Ascending aorta (tissue), 2 donors: ENCODE measurements at regions of chr1 and their contacts with region 1.

Region 1: GRCh38 chr1:151993654-151994496 is at the start of gene S100A10:
- DNase-seq: peak in 1 of 2 donors; percentile 85
- H3K4me3 ChIP-seq: peak within 1 kb of the TSS; percentile 73 to 97
- H3K27ac ChIP-seq: peak within 1 kb of the TSS; percentile 93 to 95
- H3K4me1 ChIP-seq: peaks cover 22 to 45% of the 10 kb centered on the region in 2 donors
- H3K27me3 ChIP-seq: no peaks in the 10 kb centered on the region
- CTCF ChIP-seq: peak in 1 of 3 experiments; percentile 6
- total RNA-seq, gene S100A10: 25.8 TPM

Region 2: DNA sequence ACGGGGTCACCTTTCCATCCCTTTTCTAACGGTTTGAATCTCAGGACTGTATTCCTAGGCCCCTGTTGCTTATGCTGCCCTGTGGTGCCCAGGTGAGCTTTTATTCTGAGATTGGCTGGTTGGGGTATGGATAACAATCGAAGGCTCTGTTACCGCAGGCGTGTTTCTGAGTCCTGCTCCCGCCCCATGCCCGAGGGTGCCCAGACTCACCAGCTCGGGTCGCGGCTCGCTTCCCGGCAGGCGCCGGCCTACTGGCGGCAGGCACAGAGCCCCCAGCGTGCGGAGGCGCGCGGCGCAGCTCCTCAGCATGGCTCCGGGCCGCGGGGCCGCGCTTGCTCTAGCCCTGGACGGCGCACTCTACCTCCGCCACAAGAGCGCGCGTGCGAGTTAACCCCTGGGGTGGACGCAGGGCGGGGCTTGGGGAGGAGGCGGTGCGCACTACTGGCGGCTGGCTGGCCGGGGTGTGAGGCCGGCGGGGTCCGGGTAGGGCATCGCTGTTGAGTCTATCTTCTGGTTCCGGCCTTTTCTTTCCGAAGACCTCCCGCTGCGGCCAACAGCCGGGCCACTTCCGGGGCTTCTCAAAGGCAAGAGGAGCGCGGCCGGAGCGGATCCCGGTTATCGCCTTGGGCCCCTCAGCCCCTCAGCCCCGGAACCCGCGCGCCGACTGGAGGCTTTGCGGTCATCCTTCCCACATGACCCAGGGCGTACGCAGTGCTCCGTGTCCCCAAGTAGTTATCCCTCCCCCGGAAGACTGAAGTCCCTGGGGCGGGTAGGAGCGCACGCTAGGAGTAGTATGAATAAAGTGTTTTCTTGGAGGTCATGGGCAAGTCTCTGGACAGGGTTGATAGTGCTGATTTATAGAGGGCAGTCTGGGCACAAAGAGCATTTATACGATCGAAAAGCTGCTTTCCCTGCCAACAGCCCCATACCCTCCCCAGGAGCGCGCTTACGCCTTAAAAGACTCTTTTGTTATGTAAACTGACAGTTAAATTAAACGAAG is 84.4 kb before region 1 on chr1 and contains the start of gene THEM4:
- intact Hi-C with region 1: loop called (anchors 1 kb)
- DNase-seq: peak; percentile 86 to 99
- H3K4me3 ChIP-seq: peak within 1 kb of the TSS; percentile 64 to 71
- H3K27ac ChIP-seq: peak within 1 kb of the TSS; percentile 81 to 87
- H3K4me1 ChIP-seq: peaks cover 4 to 7% of the 10 kb centered on the region in 2 donors
- H3K27me3 ChIP-seq: no peaks in the 10 kb centered on the region
- CTCF ChIP-seq: peak in 2 of 3 experiments; percentile 23 to 30
- total RNA-seq, gene THEM4: 7.7 TPM

Region 3: GRCh38 chr1:151934048-151934493 is 59.8 kb before region 1 on chr1:
- intact Hi-C with region 1: loop called (anchors 1 kb)
- DNase-seq: no peak
- H3K4me3 ChIP-seq: no peak overlapping the region
- H3K27ac ChIP-seq: no peak overlapping the region
- H3K4me1 ChIP-seq: no peaks in the 10 kb centered on the region
- H3K27me3 ChIP-seq: no peaks in the 10 kb centered on the region
- CTCF ChIP-seq: peak; percentile 71 to 87 (median 78)

Region 4: DNA sequence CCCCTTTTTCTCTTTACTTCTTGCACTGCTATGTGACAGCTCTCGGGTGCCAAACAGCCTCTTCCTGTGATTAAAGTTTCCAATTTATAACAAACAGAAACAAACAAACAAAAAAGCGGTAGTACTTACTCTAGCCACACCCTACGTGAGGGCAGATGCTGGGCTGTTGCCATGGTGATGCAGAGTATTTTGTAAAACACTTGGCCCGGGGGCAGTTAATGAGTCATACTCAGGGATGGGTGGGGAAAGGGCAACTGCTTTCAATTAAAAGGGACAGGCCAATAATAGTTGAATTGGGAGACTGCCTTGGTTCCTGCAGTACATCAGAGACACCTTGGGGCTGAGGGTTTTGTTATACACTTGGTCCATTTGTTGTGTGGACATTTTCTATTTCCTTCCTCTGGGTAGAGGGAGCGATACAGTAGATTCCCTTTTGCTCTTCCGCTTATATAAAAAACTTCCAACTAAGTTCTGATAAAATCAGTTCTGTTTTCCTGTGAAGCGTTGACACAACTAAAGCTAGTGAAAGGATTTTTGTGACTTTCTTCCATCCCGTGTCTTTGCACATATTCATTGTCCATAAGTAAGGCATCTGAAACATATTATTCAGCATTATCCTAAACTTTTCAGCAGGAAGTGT is 48.0 kb before region 1 on chr1:
- intact Hi-C with region 1: loop called (anchors 2 kb)
- DNase-seq: peak; percentile 78 to 95
- H3K4me3 ChIP-seq: peak overlapping the region in 1 of 2 donors; percentile 3
- H3K27ac ChIP-seq: peak overlapping the region; percentile 72 to 82
- H3K4me1 ChIP-seq: peaks cover 0 to 34% of the 10 kb centered on the region in 2 donors
- H3K27me3 ChIP-seq: no peaks in the 10 kb centered on the region
- CTCF ChIP-seq: peak in 1 of 3 experiments; percentile 8

Region 5: GRCh38 chr1:151968058-151968457 is 25.8 kb before region 1 on chr1:
- intact Hi-C with region 1: loop called (anchors 2 kb)
- DNase-seq: no peak
- H3K4me3 ChIP-seq: no peak overlapping the region
- H3K27ac ChIP-seq: no peak overlapping the region
- H3K4me1 ChIP-seq: peaks cover 0 to 3% of the 10 kb centered on the region in 2 donors
- H3K27me3 ChIP-seq: no peaks in the 10 kb centered on the region
- CTCF ChIP-seq: peak; percentile 58 to 80 (median 62)

Region 6: DNA sequence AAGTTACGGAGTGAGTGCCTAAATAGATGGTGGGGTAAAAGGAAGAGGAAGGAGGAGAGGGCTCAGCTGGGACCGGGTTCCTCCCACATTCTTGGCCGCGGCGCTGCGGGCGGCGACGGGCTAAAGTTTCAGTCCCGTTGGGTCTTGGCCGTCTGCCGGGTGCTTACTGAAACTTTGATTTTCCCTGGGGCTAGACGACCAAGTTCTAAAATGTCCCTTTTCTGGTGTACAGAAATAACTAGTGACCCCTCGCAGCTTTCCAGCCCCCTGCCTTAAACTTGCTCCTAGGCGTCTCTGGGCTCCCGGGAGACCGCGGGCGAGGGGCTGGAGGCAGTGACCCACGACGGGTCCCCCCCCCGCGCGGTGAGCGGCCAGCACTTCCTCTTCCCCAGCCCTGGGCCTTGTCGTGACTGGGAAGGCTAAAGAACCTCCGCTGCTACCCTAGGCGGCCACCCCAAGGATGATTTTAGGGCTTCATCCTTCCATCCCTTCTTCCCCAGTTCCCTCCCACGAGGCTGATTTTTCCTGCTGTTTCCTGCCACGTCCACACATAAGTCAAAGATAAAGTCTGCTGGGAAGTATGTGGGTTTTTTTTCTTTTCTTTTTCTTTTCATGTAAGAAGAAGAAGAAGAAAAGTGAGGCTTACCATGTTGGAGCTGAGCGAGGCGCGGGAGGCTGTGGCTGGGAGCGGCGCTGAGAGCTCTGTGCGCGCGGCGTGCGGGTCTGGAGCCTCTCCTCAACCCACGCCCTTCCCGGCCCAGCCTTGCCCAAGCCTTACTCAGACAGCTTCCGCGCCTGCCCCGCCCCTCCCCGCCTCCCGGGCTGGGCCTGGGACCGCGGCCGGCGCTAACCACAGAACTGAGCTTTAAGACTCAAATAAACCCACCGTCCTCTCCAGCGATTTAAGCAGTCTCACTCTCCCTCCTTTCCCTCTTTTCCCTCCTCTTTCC is 42.7 kb after region 1 on chr1 and contains the start of gene S100A11:
- intact Hi-C with region 1: loop called (anchors 2 kb)
- DNase-seq: peak; percentile 77 to 95
- H3K4me3 ChIP-seq: peak within 1 kb of the TSS; percentile 79 to 83
- H3K27ac ChIP-seq: peak within 1 kb of the TSS; percentile 89 to 98
- H3K4me1 ChIP-seq: peaks cover 6 to 19% of the 10 kb centered on the region in 2 donors
- H3K27me3 ChIP-seq: no peaks in the 10 kb centered on the region
- CTCF ChIP-seq: no peak
- total RNA-seq, gene S100A11: 442 TPM